ENCODE measurements at regions of chr7 and their contacts with region 1.

Region 1: DNA sequence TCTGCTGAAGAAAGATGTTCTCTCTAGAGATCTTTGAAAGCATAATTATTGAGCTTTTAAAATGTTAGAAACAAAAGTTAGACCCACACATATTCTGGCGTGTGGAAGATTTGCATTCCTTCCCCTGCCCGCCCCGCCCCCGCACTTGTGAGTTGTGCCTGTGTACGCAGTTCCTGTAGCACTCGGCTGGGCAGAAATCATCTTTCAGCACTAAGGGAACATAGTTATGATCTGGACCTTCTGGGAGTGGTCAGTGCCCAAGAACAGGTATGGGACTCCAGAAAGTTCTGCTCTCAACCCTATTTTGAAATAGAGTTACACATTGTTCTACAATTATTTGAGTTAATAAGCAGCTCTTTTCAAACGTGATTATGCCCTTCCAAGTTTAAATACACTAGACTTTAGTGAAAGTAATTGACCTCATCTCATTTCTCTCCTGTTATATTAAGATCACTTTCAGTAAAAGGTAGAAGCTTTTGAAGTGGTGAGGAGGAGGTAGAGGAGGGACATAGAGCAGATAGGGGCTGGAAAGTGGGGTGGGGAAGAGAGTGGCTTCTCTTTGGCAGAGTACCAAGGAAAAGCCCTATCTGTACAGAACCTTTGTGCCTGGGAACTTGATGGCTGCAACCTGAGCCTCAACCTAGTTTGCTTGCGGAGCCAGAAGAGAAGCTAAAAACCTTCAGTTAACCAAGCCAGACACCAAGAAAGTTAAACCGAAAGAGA is 5.7 kb downstream of the BLVRA start:
- DNase-seq: no peak
- ATAC-seq: peak; percentile 86
- H3K4me3 ChIP-seq: peak overlapping the region; percentile 77
- H3K27ac ChIP-seq: peak overlapping the region; percentile 76
- H3K4me1 ChIP-seq: peaks cover 29% of the 10 kb centered on the region
- H3K27me3 ChIP-seq: no peaks in the 10 kb centered on the region
- CTCF ChIP-seq: no peak
- EP300 ChIP-seq: no peak
- POLR2A ChIP-seq: peak; percentile 29; the same call in 1 of the 2 replicates
- RAD21 ChIP-seq: no peak

Region 2: GRCh38 chr7:43721193-43721806 is 42.9 kb before region 1 on chr7:
- CTCF ChIA-PET with region 1: interaction called, 6 read pairs
- POLR2A ChIA-PET with region 1: no interaction called
- RAD21 ChIA-PET with region 1: interaction called, 12 read pairs
- SMC1A ChIA-PET with region 1: interaction called, 6 read pairs
- in situ Hi-C with region 1: no loop called
- intact Hi-C with region 1: loop called (anchors 5 kb)
- DNase-seq: no peak
- ATAC-seq: peak; percentile 52
- H3K4me3 ChIP-seq: no peak overlapping the region
- H3K27ac ChIP-seq: no peak overlapping the region
- H3K4me1 ChIP-seq: no peaks in the 10 kb centered on the region
- H3K27me3 ChIP-seq: no peaks in the 10 kb centered on the region
- CTCF ChIP-seq: peak; percentile 40 to 64 (median 44); a peak in 5 of 6 replicates
- EP300 ChIP-seq: no peak
- POLR2A ChIP-seq: no peak
- RAD21 ChIP-seq: peak; percentile 68

Region 3: DNA sequence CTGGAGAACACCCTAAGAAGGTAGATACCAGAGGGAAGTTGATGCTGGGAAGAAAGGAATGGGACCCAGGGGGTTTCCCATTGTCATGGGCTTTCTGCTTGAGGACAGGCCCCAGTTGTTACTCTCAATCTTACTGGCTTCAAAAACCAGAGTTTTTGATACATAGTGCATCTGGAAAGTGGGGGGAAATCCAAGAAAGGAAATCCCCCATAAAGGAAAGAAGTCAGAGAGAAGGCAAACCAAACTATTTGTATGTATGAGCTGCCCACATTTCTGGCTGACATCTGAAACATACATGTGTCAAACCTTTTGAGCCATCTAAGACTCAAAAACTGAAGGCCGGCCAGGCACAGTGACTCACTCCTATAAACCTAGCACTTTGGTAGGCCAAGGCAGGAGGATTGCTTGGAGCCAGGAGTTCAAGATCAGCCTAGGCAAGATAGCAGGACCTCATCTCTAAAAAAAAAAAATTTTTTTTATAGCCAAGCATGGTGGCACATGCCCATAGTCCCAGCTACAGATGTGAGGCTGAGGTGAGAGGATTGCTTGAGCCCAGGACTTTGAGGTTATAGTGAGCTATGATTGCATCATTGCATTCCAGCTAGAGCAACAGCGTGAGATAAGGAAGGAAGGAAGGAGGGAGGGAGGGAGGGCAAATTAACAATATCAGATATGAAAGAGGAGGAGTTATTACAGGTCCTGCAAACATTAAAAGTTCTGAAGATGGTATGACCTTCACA is 28.2 kb before region 1 on chr7:
- CTCF ChIA-PET with region 1: interaction called, 16 read pairs
- POLR2A ChIA-PET with region 1: interaction called, 19 read pairs
- RAD21 ChIA-PET with region 1: interaction called, 49 read pairs
- SMC1A ChIA-PET with region 1: interaction called, 84 read pairs
- in situ Hi-C with region 1: no loop called
- intact Hi-C with region 1: no loop called
- DNase-seq: peak; percentile 90
- ATAC-seq: peak; percentile 90
- H3K4me3 ChIP-seq: no peak overlapping the region
- H3K27ac ChIP-seq: peak overlapping the region; percentile 58
- H3K4me1 ChIP-seq: peaks cover 31% of the 10 kb centered on the region
- H3K27me3 ChIP-seq: no peaks in the 10 kb centered on the region
- CTCF ChIP-seq: no peak
- EP300 ChIP-seq: peak; percentile 67 to 81; a peak in 3 of 4 replicates
- POLR2A ChIP-seq: no peak
- RAD21 ChIP-seq: 0 out of 2 replicates have a peak, but pooled peaks have one; percentile 1

Region 4: DNA sequence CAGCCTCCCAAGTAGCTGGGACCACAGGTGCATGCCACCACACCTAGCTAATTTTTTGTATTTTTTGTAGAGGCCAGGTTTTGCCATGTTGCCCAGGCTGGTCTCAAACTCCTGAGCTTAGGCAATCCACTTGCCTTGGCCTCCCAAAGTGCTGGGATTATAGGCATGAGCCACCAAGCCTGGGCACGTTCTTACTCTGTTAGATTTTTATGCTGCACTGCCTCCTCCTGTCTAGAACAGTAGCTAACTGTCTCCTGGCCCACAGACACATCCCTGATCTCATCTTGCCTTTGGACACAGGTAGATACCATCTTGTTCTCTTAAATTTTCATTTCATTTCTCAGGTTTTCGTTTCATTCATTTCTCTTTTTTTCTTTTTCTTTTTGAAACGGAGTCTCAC is 35.4 kb after region 1 on chr7:
- CTCF ChIA-PET with region 1: interaction called, 3 read pairs
- POLR2A ChIA-PET with region 1: interaction called, 3 read pairs
- RAD21 ChIA-PET with region 1: interaction called, 7 read pairs
- SMC1A ChIA-PET with region 1: interaction called, 12 read pairs
- in situ Hi-C with region 1: no loop called
- intact Hi-C with region 1: no loop called
- DNase-seq: no peak
- ATAC-seq: peak; percentile 63
- H3K4me3 ChIP-seq: no peak overlapping the region
- H3K27ac ChIP-seq: no peak overlapping the region
- H3K4me1 ChIP-seq: no peaks in the 10 kb centered on the region
- H3K27me3 ChIP-seq: no peaks in the 10 kb centered on the region
- CTCF ChIP-seq: peak; percentile 16 to 30 (median 21); a peak in 1 of 6 replicates
- EP300 ChIP-seq: no peak
- POLR2A ChIP-seq: no peak
- RAD21 ChIP-seq: peak; percentile 29; the same call in 1 of the 2 replicates